ENCODE measurements at regions of chr12 and their contacts with region 1.

Region 1: DNA sequence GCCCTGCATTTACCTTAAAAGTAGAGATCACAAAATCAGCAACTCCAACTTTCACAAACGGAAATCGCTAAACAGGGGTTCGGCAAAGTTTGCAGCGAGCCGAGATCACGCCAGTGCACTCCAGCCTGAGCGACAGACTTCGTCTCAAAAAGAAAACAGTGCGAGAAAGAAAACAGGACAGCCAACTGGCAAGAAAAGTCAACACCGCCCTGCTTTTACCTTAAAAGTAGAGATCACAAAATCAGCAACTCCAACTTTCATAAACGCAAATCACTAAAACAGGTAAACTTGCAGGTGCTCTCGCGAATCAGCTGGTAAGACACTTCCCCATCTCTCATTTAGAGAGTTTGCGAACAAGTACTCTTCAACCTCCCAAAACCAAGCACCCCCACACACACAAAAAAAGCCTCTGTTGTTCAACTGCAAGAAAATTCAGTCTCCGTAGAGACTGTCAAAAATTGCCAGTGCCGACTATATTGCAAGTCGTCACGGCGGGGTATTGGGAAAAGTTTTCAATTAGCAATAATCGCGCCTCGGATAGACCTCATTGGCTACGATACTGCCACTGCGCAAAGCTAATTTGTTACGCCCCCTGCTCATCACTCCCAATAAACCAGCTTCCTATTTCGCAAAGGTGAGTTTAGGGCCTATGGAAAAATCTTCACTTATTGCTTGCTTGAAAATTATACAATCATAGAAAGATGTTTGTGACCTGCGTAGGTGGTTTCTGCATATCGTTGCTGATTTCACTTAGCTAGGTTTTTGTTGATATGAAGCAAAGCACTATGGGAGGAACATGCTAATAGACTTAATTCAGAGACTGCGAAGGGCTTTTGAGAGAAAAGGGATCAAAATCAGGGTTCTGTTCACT is at the start of gene RNU4-1:
- DNase-seq: peak; percentile 59 to 96
- ATAC-seq: peak; percentile 57 to 66
- H3K4me3 ChIP-seq: peak within 1 kb of the TSS; percentile 55
- H3K27ac ChIP-seq: peak within 1 kb of the TSS; percentile 91 to 96
- H3K4me1 ChIP-seq: peaks cover 13% of the 10 kb centered on the region; the same call in 2 of the 3 replicates
- CTCF ChIP-seq: no peak; the same call in 2 of the 3 replicates
- EP300 ChIP-seq: no peak
- POLR2A ChIP-seq: peak; percentile 96
- RAD21 ChIP-seq: no peak; a peak in 1 of 5 replicates
- polyA plus RNA-seq, gene RNU4-1: not detected in 2 replicates

Region 2: GRCh38 chr12:120194534-120195395 is 98.1 kb before region 1 on chr12 and contains the start of gene GCN1:
- CTCF ChIA-PET with region 1: interaction called, 6 read pairs
- POLR2A ChIA-PET with region 1: interaction called, 121 read pairs
- DNase-seq: peak; percentile 76 to 84
- ATAC-seq: peak; percentile 84 to 87
- H3K4me3 ChIP-seq: peak within 1 kb of the TSS; percentile 68
- H3K27ac ChIP-seq: peak within 1 kb of the TSS; percentile 95 to 97
- H3K4me1 ChIP-seq: peaks cover 54% of the 10 kb centered on the region
- CTCF ChIP-seq: no peak
- EP300 ChIP-seq: no peak
- POLR2A ChIP-seq: peak; percentile 96
- RAD21 ChIP-seq: no peak
- polyA plus RNA-seq, gene GCN1: 64.1 and 81.5 TPM in 2 replicates

Region 3: GRCh38 chr12:120228291-120229070 is 64.4 kb before region 1 on chr12:
- CTCF ChIA-PET with region 1: interaction called, 221 read pairs
- POLR2A ChIA-PET with region 1: interaction called, 220 read pairs
- DNase-seq: peak; percentile 88 to 92
- ATAC-seq: peak; percentile 31 to 72
- H3K4me3 ChIP-seq: no peak overlapping the region
- H3K27ac ChIP-seq: peak overlapping the region; percentile 93 to 100
- H3K4me1 ChIP-seq: peaks cover 90% of the 10 kb centered on the region
- CTCF ChIP-seq: peak; percentile 97
- EP300 ChIP-seq: no peak
- POLR2A ChIP-seq: no peak
- RAD21 ChIP-seq: peak; percentile 99 to 100

Region 4: DNA sequence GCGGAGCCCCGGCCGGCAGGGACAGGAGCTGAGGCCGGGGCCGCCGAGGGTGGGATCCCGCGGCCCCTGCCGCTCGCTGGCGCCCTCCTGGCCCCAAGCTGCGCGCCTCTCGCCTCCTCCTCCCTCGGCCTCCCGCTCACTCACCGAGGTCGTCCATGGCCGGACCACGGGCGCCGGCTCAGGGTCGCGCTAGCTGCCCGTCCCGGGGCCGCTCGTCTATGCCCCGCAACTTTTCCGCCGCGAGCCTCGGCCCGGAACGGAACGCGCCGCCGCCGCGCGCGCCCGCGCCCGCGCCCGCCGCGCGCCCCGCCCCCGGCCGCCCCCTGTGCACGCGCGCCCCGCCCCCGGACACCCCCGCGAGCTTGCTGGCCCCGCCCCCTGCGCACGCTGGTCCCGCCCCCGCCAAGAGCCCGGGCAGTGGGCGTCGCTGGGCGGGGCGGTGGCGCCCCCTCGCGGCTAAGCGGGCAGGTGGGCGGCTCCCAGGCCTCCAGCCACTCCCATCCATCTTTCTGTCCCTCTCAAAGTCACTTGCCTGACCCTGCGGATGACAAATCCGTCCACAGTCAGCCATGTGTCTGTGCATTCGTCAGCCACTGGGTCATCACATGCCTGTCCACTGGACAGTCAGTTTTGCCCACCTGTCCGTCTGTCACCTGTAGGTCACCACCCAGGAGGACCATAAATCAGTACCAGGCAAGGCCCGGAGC is 27.3 kb before region 1 on chr12 and contains the start of gene PXN:
- CTCF ChIA-PET with region 1: interaction called, 26 read pairs
- POLR2A ChIA-PET with region 1: interaction called, 32 read pairs
- DNase-seq: peak; percentile 76 to 87
- ATAC-seq: peak; percentile 82 to 87
- H3K4me3 ChIP-seq: peak within 1 kb of the TSS; percentile 99
- H3K27ac ChIP-seq: peak within 1 kb of the TSS; percentile 99
- H3K4me1 ChIP-seq: peaks cover 42% of the 10 kb centered on the region
- CTCF ChIP-seq: peak; percentile 90
- EP300 ChIP-seq: no peak
- POLR2A ChIP-seq: peak; percentile 67
- RAD21 ChIP-seq: peak; percentile 92 to 98
- polyA plus RNA-seq, gene PXN: 40.1 and 62.8 TPM in 2 replicates

Region 5: GRCh38 chr12:120317224-120318105 is 24.6 kb after region 1 on chr12:
- CTCF ChIA-PET with region 1: interaction called, 9 read pairs
- POLR2A ChIA-PET with region 1: interaction called, 18 read pairs
- DNase-seq: peak; percentile 99 to 100
- ATAC-seq: peak; percentile 94 to 98
- H3K4me3 ChIP-seq: peak overlapping the region; percentile 56
- H3K27ac ChIP-seq: peak overlapping the region; percentile 83 to 90
- H3K4me1 ChIP-seq: peaks cover 23% of the 10 kb centered on the region
- CTCF ChIP-seq: peak; percentile 61
- EP300 ChIP-seq: no peak
- POLR2A ChIP-seq: peak; percentile 89
- RAD21 ChIP-seq: 0 out of 5 replicates have a peak, but pooled peaks have one; percentile 20 to 30